ENCODE measurements at regions of chr5 and their contacts with region 1.

Region 1: GRCh38 chr5:179858586-179859427 is at the start of gene MRNIP:
- DNase-seq: peak; percentile 75 to 94 (median 85)
- ATAC-seq: peak; percentile 98
- H3K4me3 ChIP-seq: peak within 1 kb of the TSS; percentile 91
- H3K4me3 Mint-ChIP-seq: peak within 1 kb of the TSS; percentile 89 to 99 (median 96)
- H3K27ac ChIP-seq: peak within 1 kb of the TSS; percentile 77
- H3K27ac Mint-ChIP-seq: peak within 1 kb of the TSS; percentile 86 to 95 (median 88)
- H3K4me1 ChIP-seq: peaks cover 5 to 12% of the 10 kb centered on the region in 2 donors
- H3K4me1 Mint-ChIP-seq: peaks cover 8 to 35% (median 26%) of the 10 kb centered on the region in 7 donors
- H3K27me3 ChIP-seq: no peaks in the 10 kb centered on the region
- H3K27me3 Mint-ChIP-seq: no peaks in the 10 kb centered on the region
- total RNA-seq, gene MRNIP: 27.9 to 133 (median 43.3) TPM

Region 2: GRCh38 chr5:179678223-179679013 is 180.4 kb before region 1 on chr5:
- CTCF ChIA-PET with region 1: no interaction called
- POLR2A ChIA-PET with region 1: no interaction called
- intact Hi-C with region 1: loop called in 1 of 2 experiments (anchors 1 kb)
- DNase-seq: peak; percentile 88 to 95 (median 92)
- ATAC-seq: peak; percentile 91
- H3K4me3 ChIP-seq: peak overlapping the region; percentile 99
- H3K4me3 Mint-ChIP-seq: peak overlapping the region; percentile 95 to 99 (median 98)
- H3K27ac ChIP-seq: peak overlapping the region; percentile 87
- H3K27ac Mint-ChIP-seq: peak overlapping the region; percentile 89 to 99 (median 97)
- H3K4me1 ChIP-seq: peaks cover 4 to 5% of the 10 kb centered on the region in 2 donors
- H3K4me1 Mint-ChIP-seq: peaks cover 15 to 39% (median 30%) of the 10 kb centered on the region in 7 donors
- H3K27me3 ChIP-seq: no peaks in the 10 kb centered on the region
- H3K27me3 Mint-ChIP-seq: peaks cover 0 to 5% (median 0%) of the 10 kb centered on the region in 5 donors

Region 3: GRCh38 chr5:179732417-179732917 is 126.3 kb before region 1 on chr5 and contains the start of gene MAML1:
- CTCF ChIA-PET with region 1: no interaction called
- POLR2A ChIA-PET with region 1: no interaction called
- intact Hi-C with region 1: loop called in 1 of 2 experiments (anchors 1 kb)
- DNase-seq: peak; percentile 95 to 100 (median 99)
- ATAC-seq: peak; percentile 97
- H3K4me3 ChIP-seq: peak within 1 kb of the TSS; percentile 70
- H3K4me3 Mint-ChIP-seq: peak within 1 kb of the TSS; percentile 91 to 96 (median 94)
- H3K27ac ChIP-seq: peak within 1 kb of the TSS; percentile 100
- H3K27ac Mint-ChIP-seq: peak within 1 kb of the TSS; percentile 84 to 99 (median 95)
- H3K4me1 ChIP-seq: peaks cover 25 to 35% of the 10 kb centered on the region in 2 donors
- H3K4me1 Mint-ChIP-seq: peaks cover 21 to 52% (median 38%) of the 10 kb centered on the region in 7 donors
- H3K27me3 ChIP-seq: no peaks in the 10 kb centered on the region
- H3K27me3 Mint-ChIP-seq: no peaks in the 10 kb centered on the region
- total RNA-seq, gene MAML1: 26.4 to 51.2 (median 35.5) TPM

Region 4: DNA sequence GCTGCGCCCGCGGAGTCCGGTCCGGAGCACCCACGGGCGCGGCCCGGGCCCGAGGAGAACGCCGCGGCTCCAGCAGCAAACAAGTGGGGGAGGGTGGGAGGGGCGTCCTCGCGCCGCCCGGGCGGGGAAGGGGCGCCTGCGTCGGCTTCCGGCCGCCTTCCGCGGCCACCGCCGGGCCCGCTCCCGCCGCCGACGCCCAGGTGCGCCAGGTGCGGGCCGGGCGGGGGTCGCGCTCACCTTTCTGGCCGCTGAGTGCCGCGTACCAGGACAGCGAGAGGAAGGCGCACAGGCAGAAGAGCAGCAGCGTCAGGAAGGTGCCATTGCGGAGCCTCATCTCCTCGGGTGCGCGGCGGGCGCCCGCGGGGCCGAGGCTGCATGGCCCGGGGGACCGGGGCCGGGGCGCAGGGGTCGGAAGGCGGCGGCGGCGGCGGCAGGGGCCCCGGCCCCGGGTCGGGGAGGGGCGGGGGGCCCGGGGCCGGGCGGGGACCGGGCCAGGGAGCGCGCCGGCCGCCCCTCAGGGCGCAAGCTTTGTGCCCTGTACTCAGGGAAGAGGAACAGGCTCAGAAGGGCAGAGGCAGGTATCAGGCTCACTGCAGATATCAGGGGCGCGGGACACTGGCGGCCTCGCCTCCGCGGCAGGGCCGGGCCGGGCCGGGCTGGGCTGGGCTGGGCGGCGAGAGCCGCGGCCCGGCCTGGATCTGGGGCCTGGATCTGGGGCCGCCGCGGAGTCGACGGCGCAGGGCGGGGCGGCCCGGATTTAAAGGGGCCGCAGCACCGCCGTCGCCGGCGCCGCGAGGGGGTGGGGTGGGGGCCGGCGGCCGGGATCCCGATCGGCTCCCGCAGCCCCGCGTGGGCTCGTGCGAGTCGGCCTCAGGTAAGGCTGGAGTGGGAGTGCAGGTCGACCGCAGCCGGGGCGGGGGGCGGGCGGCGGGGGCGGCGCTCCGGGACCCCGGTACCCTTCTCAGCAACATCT is 52.3 kb before region 1 on chr5 and contains the start of gene MGAT4B:
- CTCF ChIA-PET with region 1: interaction called, 4 read pairs
- POLR2A ChIA-PET with region 1: interaction called, 5 read pairs
- intact Hi-C with region 1: loop called (anchors 1 kb)
- DNase-seq: peak in 8 of 9 donors; percentile 28 to 81 (median 57)
- ATAC-seq: peak; percentile 84
- H3K4me3 ChIP-seq: peak within 1 kb of the TSS; percentile 41
- H3K4me3 Mint-ChIP-seq: peak within 1 kb of the TSS; percentile 46 to 87 (median 80)
- H3K27ac ChIP-seq: peak within 1 kb of the TSS; percentile 73
- H3K27ac Mint-ChIP-seq: peak within 1 kb of the TSS in 5 of 9 donors; percentile 22 to 85 (median 70)
- H3K4me1 ChIP-seq: peaks cover 19 to 26% of the 10 kb centered on the region in 2 donors
- H3K4me1 Mint-ChIP-seq: peaks cover 24 to 41% (median 33%) of the 10 kb centered on the region in 7 donors
- H3K27me3 ChIP-seq: no peaks in the 10 kb centered on the region
- H3K27me3 Mint-ChIP-seq: no peaks in the 10 kb centered on the region
- total RNA-seq, gene MGAT4B: 98.3 to 143 (median 118) TPM

Region 5: GRCh38 chr5:179836225-179837019 is 22.4 kb before region 1 on chr5:
- CTCF ChIA-PET with region 1: no interaction called
- POLR2A ChIA-PET with region 1: no interaction called
- intact Hi-C with region 1: loop called (anchors 1 kb)
- DNase-seq: peak in 7 of 9 donors; percentile 23 to 67 (median 47)
- ATAC-seq: peak; percentile 87
- H3K4me3 ChIP-seq: no peak overlapping the region
- H3K4me3 Mint-ChIP-seq: peak overlapping the region in 9 of 10 donors; percentile 1 to 78 (median 45)
- H3K27ac ChIP-seq: peak overlapping the region; percentile 69
- H3K27ac Mint-ChIP-seq: peak overlapping the region; percentile 77 to 93 (median 88)
- H3K4me1 ChIP-seq: peaks cover 8 to 19% of the 10 kb centered on the region in 2 donors
- H3K4me1 Mint-ChIP-seq: peaks cover 12 to 26% (median 15%) of the 10 kb centered on the region in 7 donors
- H3K27me3 ChIP-seq: no peaks in the 10 kb centered on the region
- H3K27me3 Mint-ChIP-seq: no peaks in the 10 kb centered on the region

Region 6: DNA sequence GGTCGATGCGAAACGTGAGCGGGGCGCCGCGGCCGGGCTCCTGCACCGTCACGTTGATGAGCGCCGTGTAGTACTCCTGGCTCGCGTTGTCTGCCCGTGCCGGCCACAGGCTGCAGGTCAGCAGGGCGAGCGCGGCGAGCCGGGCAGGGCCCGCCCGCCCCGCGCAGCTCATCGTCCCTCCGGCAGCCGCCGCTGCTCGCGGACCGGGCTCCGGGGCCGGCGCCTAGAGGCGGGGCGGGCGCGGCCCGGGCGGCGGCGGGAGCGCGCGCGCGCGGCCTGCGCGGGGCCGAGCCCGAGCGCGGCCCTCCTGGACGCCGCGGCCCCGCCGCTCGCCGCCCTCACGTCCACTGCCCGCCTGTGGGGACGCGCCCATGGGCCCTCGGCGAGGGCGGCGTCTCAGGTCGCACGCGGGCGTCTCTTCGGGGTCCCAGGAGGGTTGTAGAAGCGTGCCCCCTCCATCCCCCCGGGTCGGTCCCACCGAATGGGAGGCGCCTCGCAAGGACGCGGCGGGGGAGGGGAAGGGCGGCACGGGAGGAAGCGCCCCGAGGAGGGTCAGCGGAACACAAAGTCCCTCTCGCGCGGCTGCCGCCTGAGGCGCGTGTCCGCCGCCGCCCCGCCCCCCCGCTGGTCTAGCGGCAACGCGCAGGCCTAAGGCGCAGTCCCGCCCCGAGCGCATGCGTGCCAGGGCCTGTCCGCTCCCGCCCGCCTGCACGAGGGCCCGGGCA is 212.9 kb after region 1 on chr5 and contains the start of gene RNF130:
- CTCF ChIA-PET with region 1: no interaction called
- POLR2A ChIA-PET with region 1: no interaction called
- intact Hi-C with region 1: loop called (anchors 1 to 2 kb)
- DNase-seq: peak; percentile 64 to 91 (median 77)
- ATAC-seq: peak; percentile 88
- H3K4me3 ChIP-seq: peak within 1 kb of the TSS; percentile 62
- H3K4me3 Mint-ChIP-seq: peak within 1 kb of the TSS; percentile 80 to 93 (median 91)
- H3K27ac ChIP-seq: peak within 1 kb of the TSS; percentile 76
- H3K27ac Mint-ChIP-seq: peak within 1 kb of the TSS in 8 of 9 donors; percentile 78 to 95 (median 90)
- H3K4me1 ChIP-seq: peaks cover 6 to 21% of the 10 kb centered on the region in 2 donors
- H3K4me1 Mint-ChIP-seq: peaks cover 10 to 47% (median 38%) of the 10 kb centered on the region in 7 donors
- H3K27me3 ChIP-seq: no peaks in the 10 kb centered on the region
- H3K27me3 Mint-ChIP-seq: peaks cover 0 to 50% (median 0%) of the 10 kb centered on the region in 5 donors
- total RNA-seq, gene RNF130: 3.6 to 76.3 (median 23.3) TPM

Region 7: GRCh38 chr5:180291943-180292831 is 433.4 kb after region 1 on chr5 and contains the start of gene MAPK9:
- CTCF ChIA-PET with region 1: no interaction called
- POLR2A ChIA-PET with region 1: no interaction called
- intact Hi-C with region 1: loop called in 1 of 2 experiments (anchors 10 kb)
- DNase-seq: peak; percentile 82 to 92 (median 86)
- ATAC-seq: peak; percentile 85
- H3K4me3 ChIP-seq: peak within 1 kb of the TSS; percentile 79
- H3K4me3 Mint-ChIP-seq: peak within 1 kb of the TSS; percentile 90 to 100 (median 98)
- H3K27ac ChIP-seq: peak within 1 kb of the TSS; percentile 96
- H3K27ac Mint-ChIP-seq: peak within 1 kb of the TSS; percentile 96 to 100 (median 99)
- H3K4me1 ChIP-seq: peaks cover 15 to 17% of the 10 kb centered on the region in 2 donors
- H3K4me1 Mint-ChIP-seq: peaks cover 31 to 75% (median 58%) of the 10 kb centered on the region in 7 donors
- H3K27me3 ChIP-seq: no peaks in the 10 kb centered on the region
- H3K27me3 Mint-ChIP-seq: no peaks in the 10 kb centered on the region
- total RNA-seq, gene MAPK9: 25.7 to 41.4 (median 31.2) TPM

Measured in naive thymus-derived CD4-positive, alpha-beta T cell (primary cell).